ENCODE measurements at regions of chr9 and their contacts with region 1.

Region 1: DNA sequence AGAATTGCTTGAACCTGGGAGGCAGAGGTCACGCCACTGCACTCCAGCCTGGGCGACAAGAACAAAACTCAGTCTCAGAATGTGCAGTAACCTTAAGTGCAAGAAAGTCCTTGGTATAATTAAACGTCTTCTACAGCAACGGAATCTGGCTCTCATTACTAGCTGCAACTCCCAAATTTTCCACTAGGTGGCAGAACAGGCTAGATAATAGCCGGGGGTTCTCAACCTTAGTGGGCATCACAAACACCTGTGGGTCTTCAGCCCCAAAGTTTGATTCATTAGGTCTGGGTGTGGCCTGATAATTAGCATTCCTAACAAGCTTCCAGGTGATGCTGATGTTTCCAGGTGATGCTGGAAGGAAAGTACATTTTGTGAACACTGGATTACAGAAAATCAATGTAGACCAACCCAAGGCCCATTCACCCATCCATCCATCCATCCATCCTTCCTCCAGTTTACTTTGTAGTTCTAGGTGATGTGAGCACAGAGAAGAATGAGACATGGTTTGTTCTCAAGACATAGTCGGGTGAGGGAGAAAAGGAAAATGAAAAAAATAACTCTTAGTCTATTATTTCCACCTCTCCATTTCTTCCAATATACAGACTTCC is 37.3 kb downstream of the FBXW2 start:
- DNase-seq: no peak
- ATAC-seq: peak; percentile 79

Region 2: DNA sequence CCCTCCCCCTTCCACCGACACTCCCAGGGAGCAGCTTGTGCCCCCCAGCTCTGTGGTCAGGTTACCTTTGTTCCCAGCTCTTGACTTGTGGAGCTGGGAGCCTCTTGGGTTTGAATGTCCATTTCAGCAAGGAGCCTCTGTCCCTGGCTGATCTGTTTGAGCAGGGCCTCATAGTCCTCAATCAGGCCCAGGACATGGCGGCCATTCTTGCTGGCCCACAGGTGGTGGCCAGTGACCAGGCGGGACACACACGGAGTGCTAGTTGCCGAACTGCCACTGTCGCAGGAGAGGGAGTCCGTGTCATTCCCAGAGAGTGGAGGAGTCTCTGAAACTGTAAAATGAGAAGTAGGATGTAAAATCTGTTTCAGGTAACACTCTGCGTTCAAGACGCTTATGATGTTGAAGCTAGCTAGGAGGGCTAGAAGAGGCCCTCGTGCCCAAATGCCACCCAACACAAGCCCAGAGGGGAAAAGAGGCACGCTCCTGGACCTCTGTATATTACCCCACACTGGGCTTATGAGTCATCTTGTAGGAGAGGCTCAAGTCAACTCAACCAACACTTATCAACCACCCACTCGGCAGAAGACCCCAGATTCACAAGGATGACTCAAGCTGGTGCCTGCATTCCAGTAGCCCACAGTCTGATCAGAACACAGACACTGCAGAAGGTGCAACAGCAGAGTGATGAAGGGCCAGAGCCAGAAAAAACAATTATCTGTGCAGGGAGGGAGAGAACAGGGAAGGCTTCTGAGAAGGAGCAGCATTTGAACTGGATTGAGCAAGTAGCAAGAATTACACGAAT is 353.0 kb before region 1 on chr9:
- intact Hi-C with region 1: no loop called
- DNase-seq: no peak
- ATAC-seq: no peak

Region 3: DNA sequence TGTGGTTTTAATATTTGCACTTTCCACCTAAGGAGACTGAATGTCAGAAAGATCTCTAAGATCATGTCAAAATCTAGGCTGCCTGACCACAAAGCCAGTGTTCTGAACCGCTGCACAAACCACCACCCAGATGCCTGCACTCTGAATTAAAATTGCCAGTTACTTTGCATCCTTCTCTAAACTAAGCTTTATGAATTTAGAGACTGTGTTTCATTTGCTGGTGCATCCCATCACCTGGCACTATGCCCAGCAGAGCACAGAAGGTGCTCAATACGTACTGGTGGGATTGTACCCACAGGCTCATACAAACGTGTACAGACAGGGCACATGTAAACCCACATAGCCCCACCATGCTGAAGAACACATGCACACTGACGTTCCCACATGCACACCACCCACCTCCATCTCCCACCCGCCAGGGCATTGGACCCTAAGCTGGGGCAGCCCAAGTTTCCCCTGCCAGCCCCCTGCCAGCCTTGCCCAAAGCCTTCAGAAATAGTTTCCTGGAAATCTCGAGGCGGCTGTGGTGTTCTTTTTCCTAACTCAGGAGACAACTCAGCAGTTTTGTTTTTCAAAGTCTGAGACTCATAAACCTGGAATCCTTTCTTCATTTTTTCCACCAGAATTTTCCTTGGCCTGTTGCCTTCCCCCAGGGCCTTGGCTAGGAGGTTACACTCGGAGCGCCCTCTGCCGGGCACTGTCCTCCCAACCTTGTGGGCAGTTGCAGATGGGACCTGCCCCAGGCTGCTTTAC is 180.3 kb after region 1 on chr9:
- intact Hi-C with region 1: loop called (anchors 5 kb)
- DNase-seq: peak; percentile 97
- ATAC-seq: peak; percentile 88

Region 4: GRCh38 chr9:121059998-121060636 is 304.2 kb after region 1 on chr9:
- intact Hi-C with region 1: loop called (anchors 5 kb)
- DNase-seq: no peak
- ATAC-seq: peak; percentile 36